ENCODE measurements at regions of chr3 and their contacts with region 1.

Region 1: DNA sequence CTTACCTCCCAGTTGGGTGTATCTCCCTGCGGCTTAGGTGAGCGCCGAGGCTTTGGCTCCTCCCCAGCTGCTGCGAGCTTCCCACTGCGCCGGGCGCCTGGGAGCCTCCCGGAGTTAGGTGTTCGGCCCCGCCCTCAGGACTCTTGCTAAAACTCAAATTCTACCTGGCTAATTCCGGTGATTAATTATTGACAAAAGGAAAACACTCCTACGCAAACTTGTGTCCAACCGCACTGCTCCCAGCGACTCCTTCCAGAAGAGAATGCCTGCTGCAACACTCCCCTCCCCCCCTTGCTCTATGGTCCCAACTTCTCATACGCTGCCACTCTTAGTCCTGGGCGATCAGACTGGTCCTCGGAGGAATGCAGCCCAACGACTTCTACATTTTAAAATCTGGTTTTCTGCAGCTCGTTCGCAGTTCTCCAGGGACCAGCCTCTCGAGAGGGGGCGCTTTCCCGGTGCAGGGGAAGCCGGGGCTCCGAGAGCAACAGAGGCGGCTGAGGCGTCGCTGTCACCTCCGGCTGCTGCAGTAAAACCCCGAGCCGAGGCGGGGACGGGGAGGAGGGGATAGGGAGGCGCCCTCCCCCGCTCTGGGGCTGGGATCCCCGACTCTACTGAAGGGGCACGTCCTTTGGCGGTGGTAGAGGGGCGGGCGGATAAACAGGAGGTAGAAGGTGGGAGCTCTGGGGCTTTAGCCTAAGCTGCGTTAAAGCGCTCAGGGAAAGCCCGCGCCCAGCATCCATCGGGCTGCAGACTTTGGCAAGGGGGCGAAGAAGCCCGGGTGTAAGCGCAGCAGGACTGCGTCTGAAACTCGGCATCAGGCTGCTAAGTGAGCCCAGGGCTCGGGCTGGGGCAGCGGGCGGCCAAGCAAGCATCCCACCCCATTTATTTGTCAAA is at the start of gene SPTSSB:
- DNase-seq: peak; percentile 91 to 93
- H3K4me3 ChIP-seq: peak within 1 kb of the TSS; percentile 67
- H3K4me3 Mint-ChIP-seq: peak within 1 kb of the TSS; percentile 92
- H3K27ac Mint-ChIP-seq: peak within 1 kb of the TSS; percentile 92
- H3K4me1 ChIP-seq: no peaks in the 10 kb centered on the region
- H3K4me1 Mint-ChIP-seq: peaks cover 17% of the 10 kb centered on the region
- H3K27me3 ChIP-seq: no peaks in the 10 kb centered on the region
- H3K27me3 Mint-ChIP-seq: no peaks in the 10 kb centered on the region
- CTCF ChIP-seq: peak in 1 of 2 experiments; percentile 53
- total RNA-seq, gene SPTSSB: 45.9 and 51.6 TPM in 2 replicates

Region 2: DNA sequence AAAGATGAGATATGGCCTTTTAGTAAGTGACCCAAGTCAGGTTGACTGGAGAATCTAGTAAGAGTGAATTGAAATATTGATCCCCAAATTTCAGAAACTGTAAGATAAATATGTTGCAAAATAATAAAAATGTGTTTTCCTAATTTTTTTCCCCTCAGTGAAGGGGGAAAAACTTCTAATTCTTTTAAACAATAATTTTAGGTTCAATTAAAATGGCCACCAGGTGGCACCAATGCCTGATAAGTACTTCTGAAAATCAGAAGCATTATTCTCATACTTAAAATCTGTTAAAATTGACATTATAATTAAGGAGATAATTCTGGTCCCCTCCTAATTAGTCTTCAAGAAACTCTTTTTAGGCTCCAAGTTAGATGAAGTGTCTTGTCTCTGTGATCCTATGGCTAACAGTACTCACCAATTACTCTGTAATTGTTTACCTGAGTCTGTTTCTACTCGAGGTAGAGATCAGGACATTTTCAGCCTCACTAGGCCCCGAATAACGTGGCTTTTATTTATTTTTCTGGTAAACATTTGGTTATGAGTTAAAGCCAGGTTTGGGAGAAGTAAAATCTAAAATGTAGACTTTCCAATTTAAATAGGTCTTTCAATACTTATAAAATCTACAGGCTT is 98.0 kb before region 1 on chr3:
- CTCF ChIA-PET with region 1: interaction called, 3 read pairs
- POLR2A ChIA-PET with region 1: interaction called, 5 read pairs
- intact Hi-C with region 1: loop called (anchors 1 kb)
- DNase-seq: peak in 1 of 2 experiments; percentile 26
- H3K4me3 ChIP-seq: no peak overlapping the region
- H3K4me3 Mint-ChIP-seq: no peak overlapping the region
- H3K27ac Mint-ChIP-seq: no peak overlapping the region
- H3K4me1 ChIP-seq: peaks cover 10% of the 10 kb centered on the region
- H3K4me1 Mint-ChIP-seq: peaks cover 4% of the 10 kb centered on the region
- H3K27me3 ChIP-seq: no peaks in the 10 kb centered on the region
- H3K27me3 Mint-ChIP-seq: no peaks in the 10 kb centered on the region
- CTCF ChIP-seq: peak; percentile 17 to 62

Region 3: GRCh38 chr3:161322781-161323180 is 48.9 kb before region 1 on chr3:
- CTCF ChIA-PET with region 1: no interaction called
- POLR2A ChIA-PET with region 1: no interaction called
- intact Hi-C with region 1: loop called (anchors 1 kb)
- DNase-seq: no peak
- H3K4me3 ChIP-seq: no peak overlapping the region
- H3K4me3 Mint-ChIP-seq: no peak overlapping the region
- H3K27ac Mint-ChIP-seq: no peak overlapping the region
- H3K4me1 ChIP-seq: peaks cover 11% of the 10 kb centered on the region
- H3K4me1 Mint-ChIP-seq: peaks cover 11% of the 10 kb centered on the region
- H3K27me3 ChIP-seq: no peaks in the 10 kb centered on the region
- H3K27me3 Mint-ChIP-seq: no peaks in the 10 kb centered on the region
- CTCF ChIP-seq: no peak

Region 4: GRCh38 chr3:161354550-161354949 is 17.1 kb before region 1 on chr3:
- CTCF ChIA-PET with region 1: no interaction called
- POLR2A ChIA-PET with region 1: no interaction called
- intact Hi-C with region 1: no loop called
- DNase-seq: no peak
- H3K4me3 ChIP-seq: no peak overlapping the region
- H3K4me3 Mint-ChIP-seq: no peak overlapping the region
- H3K27ac Mint-ChIP-seq: no peak overlapping the region
- H3K4me1 ChIP-seq: no peaks in the 10 kb centered on the region
- H3K4me1 Mint-ChIP-seq: no peaks in the 10 kb centered on the region
- H3K27me3 ChIP-seq: no peaks in the 10 kb centered on the region
- H3K27me3 Mint-ChIP-seq: no peaks in the 10 kb centered on the region
- CTCF ChIP-seq: no peak

Region 5: GRCh38 chr3:161395115-161396012 is 23.7 kb after region 1 on chr3:
- CTCF ChIA-PET with region 1: interaction called, 3 read pairs
- POLR2A ChIA-PET with region 1: no interaction called
- intact Hi-C with region 1: loop called (anchors 1 kb)
- DNase-seq: no peak
- H3K4me3 ChIP-seq: no peak overlapping the region
- H3K4me3 Mint-ChIP-seq: peak overlapping the region; percentile 5
- H3K27ac Mint-ChIP-seq: peak overlapping the region; percentile 64
- H3K4me1 ChIP-seq: peaks cover 32% of the 10 kb centered on the region
- H3K4me1 Mint-ChIP-seq: peaks cover 39% of the 10 kb centered on the region
- H3K27me3 ChIP-seq: no peaks in the 10 kb centered on the region
- H3K27me3 Mint-ChIP-seq: no peaks in the 10 kb centered on the region
- CTCF ChIP-seq: no peak